ENCODE measurements at regions of chr22 and their contacts with region 1.

Region 1: DNA sequence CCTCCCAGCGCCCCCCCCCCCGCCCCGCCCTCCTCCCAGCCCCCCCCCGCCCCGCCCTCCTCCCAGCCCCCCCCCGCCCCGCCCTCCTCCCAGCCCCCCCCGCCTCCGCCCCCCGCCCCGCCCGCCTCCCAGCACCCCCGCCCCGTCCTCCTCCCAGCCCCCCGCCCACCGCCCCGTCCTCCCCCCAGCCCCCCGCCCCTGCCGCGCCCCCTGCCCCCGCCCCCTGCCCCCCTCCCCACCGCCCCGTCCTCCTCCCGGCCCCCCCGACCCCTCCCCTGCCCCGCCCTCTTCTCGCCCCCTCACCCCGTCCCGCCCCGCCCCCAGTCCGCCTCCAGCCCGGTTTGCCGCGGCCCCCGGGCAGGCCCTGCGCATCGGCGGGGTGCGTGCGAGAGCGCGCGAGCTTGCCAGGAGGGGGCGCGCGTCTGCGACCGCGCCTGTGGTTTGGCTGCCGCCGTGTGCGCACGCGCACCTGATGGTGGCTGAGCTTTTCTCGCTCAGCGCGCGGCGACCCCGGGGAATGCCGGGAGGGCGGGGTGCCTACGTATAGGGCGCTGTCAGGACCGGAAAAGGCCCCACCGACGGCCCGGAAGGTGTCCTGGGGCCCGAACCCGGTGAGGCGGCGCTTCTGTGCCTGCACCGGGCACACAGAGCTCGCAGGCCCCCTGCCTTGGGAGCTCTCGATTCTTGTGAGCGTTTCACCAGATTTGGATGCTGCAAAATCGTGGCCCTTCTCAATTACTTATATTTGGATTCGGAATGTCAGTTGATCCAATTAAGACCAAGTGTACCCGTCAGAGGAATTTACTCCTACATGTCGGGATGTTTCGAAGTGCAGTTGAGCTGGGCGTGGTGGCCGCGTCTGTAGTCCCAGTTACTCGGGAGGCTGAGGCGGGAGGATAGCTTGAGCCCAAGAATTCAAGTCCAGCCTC is 501 bp upstream of the TTLL12 start:
- DNase-seq: peak; percentile 98
- ATAC-seq: peak; percentile 96
- H3K4me3 Mint-ChIP-seq: peak overlapping the region; percentile 83
- H3K27ac Mint-ChIP-seq: peak overlapping the region; percentile 93
- H3K4me1 Mint-ChIP-seq: peaks cover 23% of the 10 kb centered on the region
- H3K27me3 Mint-ChIP-seq: no peaks in the 10 kb centered on the region

Region 2: GRCh38 chr22:42500161-42500835 is 687.1 kb before region 1 on chr22:
- CTCF ChIA-PET with region 1: no interaction called
- POLR2A ChIA-PET with region 1: no interaction called
- intact Hi-C with region 1: loop called in 1 of 2 experiments (anchors 2 kb)
- DNase-seq: peak; percentile 91
- ATAC-seq: peak; percentile 98
- H3K4me3 Mint-ChIP-seq: peak overlapping the region; percentile 38
- H3K27ac Mint-ChIP-seq: no peak overlapping the region
- H3K4me1 Mint-ChIP-seq: peaks cover 11% of the 10 kb centered on the region
- H3K27me3 Mint-ChIP-seq: no peaks in the 10 kb centered on the region

Region 3: DNA sequence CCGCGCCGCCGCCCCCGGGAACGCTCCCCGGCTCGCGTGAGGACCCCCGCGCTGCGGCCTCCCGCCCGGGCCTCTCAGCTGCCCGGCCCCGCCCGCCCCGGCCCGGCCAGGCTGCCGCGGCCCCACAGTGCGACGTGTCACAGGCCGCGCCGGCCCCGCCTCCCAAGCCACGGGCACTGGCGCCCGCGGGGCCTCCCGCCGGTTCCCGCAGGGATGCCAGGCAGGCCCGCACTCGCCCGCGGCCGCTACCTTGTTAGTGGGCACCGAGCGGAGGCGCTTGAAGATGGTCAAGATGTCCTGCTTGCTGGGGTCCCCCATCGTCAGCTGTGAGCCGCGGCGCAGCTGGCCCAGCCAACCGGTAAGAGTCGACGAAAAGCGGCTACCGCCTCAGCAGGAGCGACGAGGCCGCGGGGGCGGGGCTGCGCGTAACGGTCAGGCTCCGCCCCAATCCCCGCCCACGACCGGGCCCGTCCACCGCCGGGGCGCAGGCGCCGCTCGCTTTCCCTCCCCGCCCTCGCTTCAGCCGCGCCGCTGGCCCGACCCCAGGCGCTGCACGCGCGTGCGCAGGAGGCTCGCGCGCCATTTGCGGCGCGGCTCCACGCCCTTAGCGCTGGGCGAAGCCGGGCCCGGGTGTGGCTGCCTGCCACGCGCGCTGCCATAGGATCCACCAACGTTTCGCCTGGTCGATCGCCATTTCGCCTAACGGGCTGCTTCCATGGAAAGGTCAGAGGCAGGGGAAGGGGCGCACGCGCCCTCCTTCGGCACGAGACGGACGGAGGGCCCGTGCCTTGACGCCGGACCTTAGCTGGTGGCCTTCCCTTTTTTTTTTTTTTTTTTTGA is 330.4 kb before region 1 on chr22 and contains the start of gene ARFGAP3:
- CTCF ChIA-PET with region 1: no interaction called
- POLR2A ChIA-PET with region 1: no interaction called
- intact Hi-C with region 1: loop called in 1 of 2 experiments (anchors 1 kb)
- DNase-seq: peak; percentile 98
- ATAC-seq: peak; percentile 91
- H3K4me3 Mint-ChIP-seq: peak within 1 kb of the TSS; percentile 83
- H3K27ac Mint-ChIP-seq: peak within 1 kb of the TSS; percentile 85
- H3K4me1 Mint-ChIP-seq: peaks cover 11% of the 10 kb centered on the region
- H3K27me3 Mint-ChIP-seq: peaks cover 6% of the 10 kb centered on the region
- total RNA-seq, gene ARFGAP3: 22.5 to 23.0 TPM

Region 4: DNA sequence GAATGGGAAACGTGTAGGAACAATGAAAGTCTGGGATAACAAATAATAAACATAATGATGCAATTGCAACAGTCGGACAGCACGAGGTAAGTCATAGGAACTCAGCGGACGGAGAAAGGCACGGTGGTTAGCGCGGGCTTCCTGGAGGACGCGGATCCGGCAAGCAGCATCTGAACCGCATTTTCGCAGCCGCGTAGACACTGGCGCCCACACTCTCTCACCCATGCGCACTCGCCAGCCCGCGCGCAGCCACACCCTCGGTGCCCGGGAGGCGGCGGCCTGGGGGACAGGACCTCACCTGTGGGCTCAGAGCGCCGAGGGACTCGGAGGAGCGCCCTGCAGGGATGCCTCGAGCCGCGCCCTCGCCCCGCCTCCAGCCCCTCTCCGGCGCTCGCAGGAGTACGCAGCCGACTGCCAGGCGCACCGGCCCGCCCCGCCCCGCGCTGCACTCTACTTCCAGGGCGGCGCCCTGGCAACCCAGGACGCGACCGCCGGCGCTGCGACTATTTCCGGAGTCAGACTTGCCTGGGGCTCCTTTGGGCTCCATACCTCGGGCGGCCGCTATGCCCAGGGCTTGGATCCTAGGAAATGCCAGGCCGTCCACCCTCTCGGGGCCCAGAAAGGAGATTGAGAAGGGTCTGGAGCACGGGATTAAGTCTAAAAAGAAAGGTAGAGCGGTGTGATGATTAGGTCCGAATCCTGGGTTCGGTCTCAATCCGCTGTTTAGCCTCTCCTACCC is 98.3 kb before region 1 on chr22 and contains the start of gene TTLL1:
- CTCF ChIA-PET with region 1: no interaction called
- POLR2A ChIA-PET with region 1: no interaction called
- intact Hi-C with region 1: loop called in 1 of 2 experiments (anchors 1 kb)
- DNase-seq: peak; percentile 96
- ATAC-seq: peak; percentile 95
- H3K4me3 Mint-ChIP-seq: peak within 1 kb of the TSS; percentile 84
- H3K27ac Mint-ChIP-seq: peak within 1 kb of the TSS; percentile 94
- H3K4me1 Mint-ChIP-seq: peaks cover 21% of the 10 kb centered on the region
- H3K27me3 Mint-ChIP-seq: no peaks in the 10 kb centered on the region
- total RNA-seq, gene TTLL1: 5.7 to 6.6 TPM

Region 5: DNA sequence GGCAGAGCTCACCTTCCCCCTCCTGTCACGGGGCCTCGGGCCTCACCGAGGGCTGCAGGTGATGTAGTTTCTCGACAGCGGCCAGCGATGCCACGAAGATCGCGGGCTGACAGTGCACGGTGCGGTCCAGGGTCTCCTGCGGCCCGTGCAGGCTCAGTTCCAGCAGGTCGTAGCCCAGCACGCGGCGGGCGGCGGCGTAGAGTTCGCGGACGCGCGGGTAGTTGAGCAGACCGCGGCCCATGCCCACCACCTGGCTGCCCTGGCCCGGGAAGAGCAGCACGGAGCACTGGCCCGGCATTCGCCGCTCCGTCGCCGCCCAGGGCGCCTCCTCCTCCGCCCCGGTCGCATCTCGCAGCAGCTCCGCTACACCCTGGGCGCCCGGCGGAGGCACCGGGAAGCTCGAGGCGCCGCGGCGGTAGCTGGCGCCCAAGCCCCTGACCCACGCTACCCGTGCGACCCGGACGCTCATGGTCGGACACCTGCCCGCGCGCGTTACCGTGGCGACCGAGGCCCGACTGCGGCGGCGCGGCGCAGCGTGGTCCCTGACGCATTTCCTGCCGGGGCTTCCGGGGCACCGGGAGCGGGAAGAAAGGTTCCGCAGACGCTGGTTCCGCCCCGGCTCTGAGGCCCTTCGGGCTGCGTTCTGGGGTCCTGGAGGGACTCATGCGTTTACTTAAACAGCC is 44.4 kb before region 1 on chr22 and contains the start of gene MCAT:
- CTCF ChIA-PET with region 1: no interaction called
- POLR2A ChIA-PET with region 1: no interaction called
- intact Hi-C with region 1: loop called (anchors 1 to 2 kb)
- DNase-seq: peak; percentile 88
- ATAC-seq: peak; percentile 93
- H3K4me3 Mint-ChIP-seq: peak within 1 kb of the TSS; percentile 85
- H3K27ac Mint-ChIP-seq: peak within 1 kb of the TSS; percentile 95
- H3K4me1 Mint-ChIP-seq: peaks cover 27% of the 10 kb centered on the region
- H3K27me3 Mint-ChIP-seq: no peaks in the 10 kb centered on the region
- total RNA-seq, gene MCAT: 13.8 to 16.9 TPM

Region 6: DNA sequence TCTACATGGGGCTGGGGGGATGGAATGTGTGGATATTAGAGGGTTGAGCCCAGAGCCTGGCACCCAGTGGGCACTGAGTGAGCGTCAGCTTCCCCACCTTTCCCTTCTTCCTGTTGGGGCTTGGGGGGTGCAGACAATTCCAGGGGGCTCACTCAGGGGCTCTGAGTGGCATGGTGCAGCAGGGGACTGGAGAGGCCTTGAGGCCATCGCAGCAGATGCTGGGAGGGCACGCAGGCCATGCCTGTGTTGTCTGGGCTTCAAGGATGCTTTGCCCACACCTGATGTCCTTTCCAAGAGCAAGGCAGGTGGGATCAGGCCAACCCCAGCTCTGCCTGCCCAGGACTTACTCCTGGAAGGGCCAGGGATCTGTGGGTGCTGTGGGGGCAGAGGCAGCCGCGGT is 10.7 kb after region 1 on chr22:
- CTCF ChIA-PET with region 1: no interaction called
- POLR2A ChIA-PET with region 1: no interaction called
- intact Hi-C with region 1: no loop called
- DNase-seq: no peak
- ATAC-seq: no peak
- H3K4me3 Mint-ChIP-seq: no peak overlapping the region
- H3K27ac Mint-ChIP-seq: no peak overlapping the region
- H3K4me1 Mint-ChIP-seq: no peaks in the 10 kb centered on the region
- H3K27me3 Mint-ChIP-seq: no peaks in the 10 kb centered on the region

Region 7: GRCh38 chr22:43230971-43231723 is 43.7 kb after region 1 on chr22:
- CTCF ChIA-PET with region 1: no interaction called
- POLR2A ChIA-PET with region 1: no interaction called
- intact Hi-C with region 1: loop called in 1 of 2 experiments (anchors 1 kb)
- DNase-seq: peak; percentile 83
- ATAC-seq: peak; percentile 89
- H3K4me3 Mint-ChIP-seq: no peak overlapping the region
- H3K27ac Mint-ChIP-seq: no peak overlapping the region
- H3K4me1 Mint-ChIP-seq: peaks cover 4% of the 10 kb centered on the region
- H3K27me3 Mint-ChIP-seq: peaks cover 3% of the 10 kb centered on the region

Region 8: DNA sequence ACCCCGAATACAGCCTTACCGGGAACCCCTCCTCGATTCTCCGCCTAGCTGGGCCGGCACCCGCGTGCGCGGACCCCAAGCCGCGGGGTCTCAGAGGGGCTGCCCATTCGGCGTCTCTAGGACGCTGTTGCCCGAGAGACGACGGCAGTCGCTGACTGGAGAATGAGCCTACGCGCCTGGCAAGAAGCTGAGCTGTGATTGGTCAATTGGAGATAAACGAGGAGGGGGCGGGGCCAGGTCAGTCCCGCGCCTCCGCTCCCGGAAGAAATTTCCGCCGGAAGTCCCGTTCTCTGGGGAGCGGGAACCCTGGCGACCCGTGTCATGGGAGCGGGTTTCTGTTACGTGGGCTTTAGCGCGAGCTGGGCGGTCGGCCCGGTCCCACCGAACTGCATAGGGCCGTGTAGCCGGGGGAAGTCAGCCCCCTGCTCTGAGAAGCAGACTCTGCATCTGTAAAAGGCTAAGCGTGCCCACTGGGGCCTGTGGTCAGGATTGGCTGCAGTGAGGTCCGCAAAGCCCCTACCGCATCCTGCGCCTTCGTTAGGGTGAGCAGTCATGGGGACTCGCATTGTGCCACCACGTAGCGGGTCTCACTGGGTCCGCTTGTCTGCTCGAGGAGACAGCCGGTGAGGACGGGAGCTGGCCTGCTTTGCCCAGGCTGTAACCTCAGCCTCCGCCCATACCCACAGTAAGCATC is 624.9 kb after region 1 on chr22 and contains the start of gene EFCAB6:
- CTCF ChIA-PET with region 1: no interaction called
- POLR2A ChIA-PET with region 1: no interaction called
- intact Hi-C with region 1: loop called in 1 of 2 experiments (anchors 5 kb)
- DNase-seq: peak; percentile 95
- ATAC-seq: peak; percentile 89
- H3K4me3 Mint-ChIP-seq: peak within 1 kb of the TSS; percentile 87
- H3K27ac Mint-ChIP-seq: peak within 1 kb of the TSS; percentile 90
- H3K4me1 Mint-ChIP-seq: peaks cover 23% of the 10 kb centered on the region
- H3K27me3 Mint-ChIP-seq: no peaks in the 10 kb centered on the region
- total RNA-seq, gene EFCAB6: 0.56 to 0.71 TPM

Measured in activated CD4-positive, alpha-beta T cell treated with anti-CD3 and anti-CD28 coated beads for 36 hours (primary cell).